Aorta (tissue), 5 donors: ENCODE measurements at regions of chr16 and their contacts with region 1.

Region 1: DNA sequence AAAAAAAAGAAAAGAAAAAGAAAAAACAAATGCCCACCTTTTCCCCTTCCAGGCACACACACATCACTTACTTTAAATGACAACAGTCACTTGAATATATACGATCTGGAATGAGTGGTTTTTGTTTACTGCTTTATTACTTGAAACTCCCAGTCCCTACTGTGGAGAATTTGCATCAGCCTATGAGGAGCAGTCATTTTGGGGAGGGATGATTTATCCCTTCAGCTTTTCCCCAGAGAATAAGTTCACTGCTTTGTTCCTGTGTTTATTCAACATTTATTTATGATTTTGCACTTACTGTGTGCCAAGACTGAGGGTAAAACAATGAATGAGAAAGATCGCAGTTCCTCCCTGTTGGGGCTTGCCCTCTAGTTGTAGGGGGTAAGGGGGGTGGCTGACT is 4.7 kb upstream of the ZNF423 start:
- DNase-seq: no peak
- ATAC-seq: no peak
- H3K4me3 ChIP-seq: no peak overlapping the region
- H3K27ac ChIP-seq: no peak overlapping the region
- H3K4me1 ChIP-seq: no peaks in the 10 kb centered on the region
- H3K27me3 ChIP-seq: no peaks in the 10 kb centered on the region

Region 2: DNA sequence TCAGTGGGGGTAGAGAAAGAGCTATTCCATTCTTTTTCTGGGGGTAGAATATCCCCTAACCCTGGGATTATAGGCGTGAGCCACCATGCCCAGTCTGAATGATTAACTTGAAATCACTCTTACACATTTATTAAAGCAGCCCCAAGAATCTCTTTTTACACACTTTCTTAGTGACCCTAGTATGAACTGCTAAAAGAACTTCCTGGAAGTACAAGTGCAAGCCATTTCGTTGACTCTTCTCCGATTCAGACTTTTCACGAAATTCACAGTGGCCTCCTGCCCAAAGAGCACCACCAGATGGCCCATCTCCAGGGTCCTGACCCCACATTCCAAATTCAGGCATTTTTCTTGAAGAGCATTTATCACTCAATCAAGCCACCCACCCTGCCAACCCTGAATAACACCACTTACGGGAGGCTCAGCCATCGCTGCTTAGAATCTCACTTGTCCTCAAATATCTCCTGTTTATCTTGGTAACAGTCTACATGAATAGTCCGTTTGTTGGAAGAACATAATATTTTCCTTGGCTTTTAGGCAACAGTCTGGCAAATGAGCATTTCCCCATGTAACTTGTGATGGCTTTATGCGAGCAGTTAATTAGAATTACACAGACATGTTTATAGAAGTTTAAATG is 32.7 kb before region 1 on chr16:
- intact Hi-C with region 1: loop called (anchors 2 to 5 kb)
- DNase-seq: peak in 1 of 2 donors; percentile 84
- ATAC-seq: peak; percentile 78
- H3K4me3 ChIP-seq: no peak overlapping the region
- H3K27ac ChIP-seq: peak overlapping the region in 1 of 2 donors; percentile 50
- H3K4me1 ChIP-seq: no peaks in the 10 kb centered on the region
- H3K27me3 ChIP-seq: no peaks in the 10 kb centered on the region

Region 3: GRCh38 chr16:49980166-49980565 is 119.6 kb after region 1 on chr16:
- intact Hi-C with region 1: no loop called
- DNase-seq: no peak
- ATAC-seq: no peak
- H3K4me3 ChIP-seq: no peak overlapping the region
- H3K27ac ChIP-seq: no peak overlapping the region
- H3K4me1 ChIP-seq: no peaks in the 10 kb centered on the region
- H3K27me3 ChIP-seq: peaks cover 0 to 3% of the 10 kb centered on the region in 2 donors